ENCODE measurements at regions of chr17 and their contacts with region 1.

Region 1: GRCh38 chr17:973053-973452 is 6.5 kb downstream of the NXN start:
- DNase-seq: peak; percentile 99
- H3K4me3 ChIP-seq: no peak overlapping the region
- H3K27ac ChIP-seq: peak overlapping the region; percentile 91
- H3K4me1 ChIP-seq: peaks cover 41% of the 10 kb centered on the region
- H3K27me3 ChIP-seq: no peaks in the 10 kb centered on the region
- CTCF ChIP-seq: no peak

Region 2: DNA sequence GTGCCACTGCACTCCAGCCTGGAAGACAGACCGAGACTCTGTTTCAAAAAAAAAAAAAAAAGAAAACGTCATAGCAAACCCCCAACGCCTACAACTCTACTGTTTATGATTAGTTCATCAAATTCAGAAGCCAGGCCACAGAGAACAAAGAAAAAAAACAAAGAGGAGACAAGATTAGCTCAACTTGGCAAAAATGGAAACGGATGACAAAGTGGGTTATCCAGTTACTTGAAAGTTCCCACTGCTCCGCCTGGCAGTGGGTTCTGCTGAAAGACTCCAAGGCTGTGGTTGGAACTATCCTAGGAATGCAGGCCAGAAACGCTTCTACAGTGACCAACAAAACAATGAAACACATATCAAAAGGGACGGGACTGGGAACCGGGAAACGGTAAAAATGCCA is 137.8 kb before region 1 on chr17:
- CTCF ChIA-PET with region 1: no interaction called
- dilution Hi-C with region 1: no loop called
- in situ Hi-C with region 1: no loop called
- intact Hi-C with region 1: loop called (anchors 1 kb)
- DNase-seq: peak; percentile 80
- H3K4me3 ChIP-seq: no peak overlapping the region
- H3K27ac ChIP-seq: peak overlapping the region; percentile 52
- H3K4me1 ChIP-seq: peaks cover 7% of the 10 kb centered on the region
- H3K27me3 ChIP-seq: no peaks in the 10 kb centered on the region
- CTCF ChIP-seq: no peak

Region 3: DNA sequence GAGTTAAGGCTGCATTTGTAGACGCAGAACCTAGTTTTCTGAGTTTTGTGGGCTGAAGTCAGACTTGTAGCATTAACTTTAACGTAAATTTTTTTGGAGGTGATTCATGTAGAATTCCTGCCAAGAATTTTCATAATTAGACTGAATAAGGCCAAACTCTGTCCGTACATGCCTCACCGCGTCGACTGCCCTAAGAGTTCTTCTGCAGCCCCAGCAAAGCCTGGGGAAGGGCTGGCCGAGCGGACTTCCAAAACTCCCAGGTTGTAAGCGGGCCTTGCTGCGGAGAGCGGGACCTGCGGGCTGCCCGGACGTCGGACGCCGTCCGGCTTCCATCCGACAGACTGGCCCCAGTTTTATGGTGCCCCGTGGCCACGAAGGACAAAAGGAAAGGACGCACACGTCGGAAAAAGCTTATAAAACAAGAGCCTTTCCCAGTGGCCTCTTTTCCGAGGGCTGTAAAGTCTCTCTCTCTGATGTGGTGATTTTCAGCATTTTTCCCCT is 69.0 kb before region 1 on chr17:
- CTCF ChIA-PET with region 1: no interaction called
- dilution Hi-C with region 1: loop called (anchors 5 kb)
- in situ Hi-C with region 1: no loop called
- intact Hi-C with region 1: loop called (anchors 1 kb)
- DNase-seq: peak; percentile 94
- H3K4me3 ChIP-seq: peak overlapping the region in 1 of 3 experiments; percentile 12
- H3K27ac ChIP-seq: peak overlapping the region; percentile 86
- H3K4me1 ChIP-seq: peaks cover 40% of the 10 kb centered on the region
- H3K27me3 ChIP-seq: no peaks in the 10 kb centered on the region
- CTCF ChIP-seq: no peak

Region 4: DNA sequence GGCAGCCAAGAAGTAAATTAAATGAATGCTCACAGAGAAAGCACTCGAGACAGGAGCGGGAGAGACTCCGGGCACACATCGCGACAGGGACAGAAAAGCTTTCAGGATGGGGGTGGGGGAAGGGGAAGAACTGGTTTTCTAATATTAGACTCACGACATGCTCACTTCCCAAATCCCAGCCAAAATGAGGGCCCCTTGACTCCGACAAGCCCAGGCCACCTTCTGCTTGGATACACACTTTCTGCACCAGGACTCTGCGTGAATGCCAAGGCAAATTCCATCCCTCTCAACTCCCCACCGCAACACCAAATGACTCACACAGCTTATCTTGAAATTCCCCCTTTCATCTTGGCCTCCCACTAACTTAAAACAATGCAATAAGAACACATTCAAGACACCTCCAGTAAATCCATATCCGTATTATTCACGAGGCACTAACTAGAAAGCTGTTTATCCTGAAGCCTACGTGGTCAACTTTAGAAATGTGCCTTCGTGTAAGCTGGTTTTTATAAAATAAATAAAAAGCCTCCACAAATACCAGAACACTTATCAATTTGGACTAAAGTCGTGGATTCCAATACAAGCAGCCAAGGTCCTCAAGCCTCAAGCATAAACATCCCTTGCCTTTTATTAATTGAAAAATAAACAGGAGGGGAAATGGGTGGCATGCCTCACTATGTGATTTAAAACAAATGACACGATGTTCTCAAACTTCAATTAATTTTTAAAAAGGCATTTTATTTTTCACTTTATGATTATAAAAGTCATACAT is 39.6 kb before region 1 on chr17:
- CTCF ChIA-PET with region 1: no interaction called
- dilution Hi-C with region 1: no loop called
- in situ Hi-C with region 1: no loop called
- intact Hi-C with region 1: loop called (anchors 1 kb)
- DNase-seq: peak; percentile 91
- H3K4me3 ChIP-seq: no peak overlapping the region
- H3K27ac ChIP-seq: peak overlapping the region; percentile 74
- H3K4me1 ChIP-seq: peaks cover 52% of the 10 kb centered on the region
- H3K27me3 ChIP-seq: no peaks in the 10 kb centered on the region
- CTCF ChIP-seq: no peak

Measured in mammary epithelial cell (primary cell).